Endothelial cell of umbilical vein (primary cell): ENCODE measurements at regions of chr10 and their contacts with region 1.

Region 1: DNA sequence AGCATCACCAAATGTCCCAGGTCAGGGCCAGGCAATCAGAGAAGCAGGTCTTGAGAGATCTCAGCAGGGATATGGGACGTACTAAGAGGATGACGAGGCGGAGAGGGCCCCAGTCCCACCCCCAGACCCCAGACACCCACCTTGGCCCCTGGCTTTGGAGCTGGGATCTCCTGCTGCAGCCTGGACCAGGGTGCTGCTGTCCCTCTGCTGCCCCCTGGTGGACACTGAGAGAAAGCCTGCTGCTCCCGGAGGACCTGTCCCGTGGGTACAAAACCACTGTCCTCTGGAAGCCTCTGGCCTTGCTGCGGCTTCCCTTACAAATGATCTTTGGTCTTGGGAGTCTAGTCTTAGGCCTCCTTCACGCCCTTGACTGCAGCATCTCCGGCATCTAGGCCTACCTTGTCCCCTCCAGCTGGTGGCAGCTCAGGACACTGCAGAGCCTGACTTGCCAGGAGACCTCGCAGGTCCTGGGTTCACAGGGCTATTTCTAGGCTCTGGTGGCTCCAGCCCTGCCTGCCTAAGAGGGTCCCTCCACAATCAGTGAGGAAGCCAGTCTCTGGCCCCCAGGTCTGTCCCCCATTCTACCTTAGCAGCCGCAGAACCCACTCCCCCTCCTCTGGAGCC is 97.1 kb downstream of the RGS10 start:
- DNase-seq: peak; percentile 57
- H3K4me3 ChIP-seq: no peak overlapping the region
- H3K27ac ChIP-seq: no peak overlapping the region
- H3K4me1 ChIP-seq: no peaks in the 10 kb centered on the region
- H3K27me3 ChIP-seq: no peaks in the 10 kb centered on the region
- CTCF ChIP-seq: peak; percentile 78 to 96
- POLR2A ChIP-seq: no peak

Region 2: GRCh38 chr10:119139464-119140067 is 305.9 kb before region 1 on chr10:
- CTCF ChIA-PET with region 1: interaction called, 6 read pairs
- POLR2A ChIA-PET with region 1: no interaction called
- dilution Hi-C with region 1: no loop called
- intact Hi-C with region 1: loop called (anchors 5 kb)
- DNase-seq: peak; percentile 37
- H3K4me3 ChIP-seq: no peak overlapping the region
- H3K27ac ChIP-seq: no peak overlapping the region
- H3K4me1 ChIP-seq: peaks cover 3% of the 10 kb centered on the region
- H3K27me3 ChIP-seq: no peaks in the 10 kb centered on the region
- CTCF ChIP-seq: peak; percentile 50 to 75
- POLR2A ChIP-seq: no peak

Region 3: DNA sequence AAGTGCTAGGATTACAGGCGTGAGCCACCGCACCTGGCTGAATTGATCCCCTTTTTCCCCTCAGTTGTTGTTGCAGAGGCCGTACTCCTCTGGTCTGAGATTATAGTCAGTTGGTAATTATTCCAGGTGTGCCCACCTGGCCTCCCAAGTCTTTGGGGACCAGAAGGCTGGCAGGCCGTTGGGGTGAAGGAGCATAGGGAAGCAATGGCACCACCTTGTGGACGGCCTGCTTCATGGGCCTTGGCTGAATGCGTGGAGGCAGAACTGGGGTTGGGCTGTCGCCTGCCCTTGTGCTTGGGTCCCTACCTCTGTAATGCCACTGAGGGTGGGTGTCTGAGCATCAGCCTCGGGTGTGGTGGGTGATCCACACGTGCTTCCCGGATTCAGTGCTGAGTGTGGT is 28.6 kb before region 1 on chr10:
- CTCF ChIA-PET with region 1: interaction called, 28 read pairs
- POLR2A ChIA-PET with region 1: no interaction called
- dilution Hi-C with region 1: no loop called
- intact Hi-C with region 1: no loop called
- DNase-seq: peak; percentile 52
- H3K4me3 ChIP-seq: no peak overlapping the region
- H3K27ac ChIP-seq: no peak overlapping the region
- H3K4me1 ChIP-seq: peaks cover 4% of the 10 kb centered on the region
- H3K27me3 ChIP-seq: no peaks in the 10 kb centered on the region
- CTCF ChIP-seq: peak; percentile 68 to 88
- POLR2A ChIP-seq: no peak

Region 4: DNA sequence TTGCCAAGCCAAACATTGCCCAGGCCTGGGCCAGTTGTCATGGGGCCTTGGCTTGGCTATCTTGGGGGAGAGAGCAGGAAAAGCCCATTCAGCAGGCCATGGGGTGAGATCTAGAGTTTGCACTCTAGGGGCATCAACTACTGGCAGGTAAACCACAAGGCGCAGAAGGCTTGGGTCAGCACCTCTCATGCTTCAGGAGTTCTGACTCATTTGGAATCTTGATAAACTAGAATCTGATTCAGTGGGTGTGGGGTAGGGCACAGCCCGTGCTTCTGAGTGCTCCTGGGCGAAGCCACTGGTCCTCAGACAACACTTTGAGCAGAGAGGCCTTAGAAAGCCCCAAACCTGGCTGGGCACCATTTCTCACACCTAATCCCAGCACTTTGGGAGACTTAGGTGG is 16.0 kb after region 1 on chr10:
- CTCF ChIA-PET with region 1: interaction called, 10 read pairs
- POLR2A ChIA-PET with region 1: no interaction called
- dilution Hi-C with region 1: no loop called
- intact Hi-C with region 1: no loop called
- DNase-seq: no peak
- H3K4me3 ChIP-seq: no peak overlapping the region
- H3K27ac ChIP-seq: no peak overlapping the region
- H3K4me1 ChIP-seq: no peaks in the 10 kb centered on the region
- H3K27me3 ChIP-seq: peaks cover 0 to 8% of the 10 kb centered on the region in 2 experiments
- CTCF ChIP-seq: no peak
- POLR2A ChIP-seq: no peak

Region 5: DNA sequence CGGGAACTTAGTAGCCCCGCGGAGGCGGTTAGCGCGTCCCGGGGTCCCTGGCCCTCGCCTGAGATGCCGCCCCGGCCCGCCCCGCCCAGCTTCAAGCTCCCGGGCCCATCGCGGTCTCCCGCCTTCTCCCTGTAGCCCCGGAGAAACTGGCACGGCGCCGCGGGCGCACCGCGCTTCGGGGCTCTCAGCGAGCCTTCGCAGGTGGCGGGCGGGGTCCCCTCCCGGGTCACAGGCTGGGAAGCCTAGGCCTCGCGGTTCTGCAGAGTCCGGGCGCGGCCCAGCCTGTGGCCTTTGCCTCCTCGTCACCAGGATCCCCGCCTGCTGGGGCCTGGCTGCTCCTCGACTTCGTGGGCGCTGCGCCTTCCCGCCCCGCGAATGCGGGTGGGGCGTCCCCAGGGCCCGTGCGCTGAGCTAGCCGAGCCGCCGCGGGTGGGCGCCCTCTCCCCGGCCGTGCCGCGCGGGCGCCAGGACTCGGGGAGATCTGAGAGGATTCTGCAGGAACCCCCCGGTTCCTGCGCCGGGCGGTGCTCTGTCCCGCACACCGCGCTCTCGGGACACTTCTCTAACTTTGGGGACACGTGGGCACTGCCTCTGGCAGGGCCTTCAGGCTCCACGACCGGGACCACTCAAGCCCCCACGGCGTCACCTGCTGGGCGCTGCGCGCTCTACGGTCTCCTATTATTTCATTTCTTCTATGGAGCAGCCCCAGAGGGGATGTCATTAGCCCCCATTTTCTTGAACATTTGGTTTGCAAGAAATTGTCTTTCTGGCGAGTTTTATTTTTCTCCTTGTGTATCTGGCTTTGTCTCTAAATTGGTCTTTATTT is 97.8 kb after region 1 on chr10:
- CTCF ChIA-PET with region 1: interaction called, 15 read pairs
- POLR2A ChIA-PET with region 1: no interaction called
- dilution Hi-C with region 1: no loop called
- intact Hi-C with region 1: loop called (anchors 5 kb)
- DNase-seq: peak; percentile 48
- H3K4me3 ChIP-seq: peak overlapping the region; percentile 65 to 81 (median 67)
- H3K27ac ChIP-seq: no peak overlapping the region
- H3K4me1 ChIP-seq: peaks cover 6% of the 10 kb centered on the region
- H3K27me3 ChIP-seq: peaks cover 3 to 4% of the 10 kb centered on the region in 2 experiments
- CTCF ChIP-seq: peak; percentile 48 to 67
- POLR2A ChIP-seq: peak; percentile 13